Gastrocnemius medialis (tissue), 4 donors: ENCODE measurements at regions of chr7 and their contacts with region 1.

Region 1: GRCh38 chr7:78026492-78026891 is 227.9 kb downstream of the PHTF2 start:
- DNase-seq: no peak
- ATAC-seq: no peak
- H3K4me3 ChIP-seq: no peak overlapping the region
- H3K27ac ChIP-seq: no peak overlapping the region
- H3K4me1 ChIP-seq: no peaks in the 10 kb centered on the region
- H3K27me3 ChIP-seq: no peaks in the 10 kb centered on the region
- CTCF ChIP-seq: no peak
- POLR2A ChIP-seq: no peak

Region 2: DNA sequence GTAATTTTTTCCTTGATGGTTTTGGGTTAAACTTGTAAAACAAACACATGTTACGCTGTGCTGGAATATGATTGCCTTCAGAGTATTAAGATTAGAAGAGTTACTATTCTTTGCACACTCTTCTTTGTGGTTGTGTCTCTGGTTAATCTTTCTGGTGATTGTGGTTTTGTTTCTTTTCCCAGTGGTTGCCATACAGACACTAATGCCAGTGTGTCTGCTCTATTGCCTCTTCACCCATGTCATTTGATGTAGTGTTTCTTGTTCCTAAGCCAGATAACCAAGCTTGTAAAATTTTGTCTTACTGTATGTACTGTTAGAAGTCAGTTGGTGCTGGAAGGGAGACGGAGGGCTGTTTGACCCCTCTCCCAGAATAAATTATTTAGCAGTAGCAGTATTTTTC is 103.1 kb before region 1 on chr7:
- in situ Hi-C with region 1: no loop called
- intact Hi-C with region 1: no loop called
- DNase-seq: no peak
- ATAC-seq: no peak
- H3K4me3 ChIP-seq: no peak overlapping the region
- H3K27ac ChIP-seq: no peak overlapping the region
- H3K4me1 ChIP-seq: no peaks in the 10 kb centered on the region
- H3K27me3 ChIP-seq: no peaks in the 10 kb centered on the region
- CTCF ChIP-seq: no peak
- POLR2A ChIP-seq: no peak

Region 3: GRCh38 chr7:78039790-78040776 is 13.6 kb after region 1 on chr7:
- in situ Hi-C with region 1: no loop called
- intact Hi-C with region 1: loop called (anchors 1 kb)
- DNase-seq: no peak
- ATAC-seq: no peak
- H3K4me3 ChIP-seq: no peak overlapping the region
- H3K27ac ChIP-seq: no peak overlapping the region
- H3K4me1 ChIP-seq: no peaks in the 10 kb centered on the region
- H3K27me3 ChIP-seq: no peaks in the 10 kb centered on the region
- CTCF ChIP-seq: peak; percentile 35 to 72 (median 58)
- POLR2A ChIP-seq: no peak

Region 4: DNA sequence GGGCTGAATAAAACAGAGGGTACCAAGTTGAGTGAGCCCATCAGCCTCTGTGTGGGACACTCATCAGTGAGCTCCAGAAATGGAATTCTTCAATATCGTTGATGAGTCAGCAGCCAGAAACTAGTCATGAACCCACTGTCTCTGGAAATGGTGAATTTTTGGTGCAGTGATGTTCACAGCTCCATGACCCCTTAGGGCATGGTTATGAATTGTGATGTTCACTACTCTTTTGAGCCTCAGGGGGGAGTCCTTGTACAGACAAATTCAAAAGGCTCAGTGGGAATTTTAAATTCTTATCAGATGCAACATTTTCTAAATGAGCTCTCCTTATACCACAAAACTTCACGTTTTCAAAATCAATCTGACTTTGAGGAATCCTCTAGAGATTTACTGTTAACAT is 107.8 kb after region 1 on chr7:
- in situ Hi-C with region 1: no loop called
- intact Hi-C with region 1: no loop called
- DNase-seq: no peak
- ATAC-seq: no peak
- H3K4me3 ChIP-seq: no peak overlapping the region
- H3K27ac ChIP-seq: no peak overlapping the region
- H3K4me1 ChIP-seq: no peaks in the 10 kb centered on the region
- H3K27me3 ChIP-seq: no peaks in the 10 kb centered on the region
- CTCF ChIP-seq: peak in 1 of 5 experiments; percentile 24
- POLR2A ChIP-seq: no peak